Breast epithelium (tissue), 4 donors: ENCODE measurements at regions of chr13 and their contacts with region 1.

Region 1: DNA sequence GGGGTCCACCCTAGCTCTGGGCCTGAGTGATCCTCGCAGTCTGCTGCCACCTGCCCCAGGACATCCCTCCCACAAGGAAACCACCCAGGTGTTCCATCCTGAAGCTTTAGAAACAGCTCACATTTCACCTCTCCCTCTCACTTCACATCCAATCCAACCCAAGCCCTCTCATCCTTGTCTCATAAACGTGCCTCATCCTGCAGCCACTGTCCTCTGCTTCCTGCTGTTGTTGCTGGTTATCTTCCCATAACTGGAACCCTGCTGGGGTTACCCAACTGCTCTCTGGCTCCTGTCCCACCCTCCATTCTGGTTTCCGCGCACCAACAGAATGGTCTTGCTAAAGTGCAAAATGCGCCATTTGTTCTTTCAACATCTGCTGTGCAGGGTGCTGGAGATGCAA is 59.7 kb upstream of the MTIF3 start:
- DNase-seq: no peak
- H3K4me3 ChIP-seq: no peak overlapping the region
- H3K27ac ChIP-seq: no peak overlapping the region
- H3K4me1 ChIP-seq: no peaks in the 10 kb centered on the region
- H3K27me3 ChIP-seq: no peaks in the 10 kb centered on the region
- CTCF ChIP-seq: no peak
- POLR2A ChIP-seq: no peak

Region 2: GRCh38 chr13:27549406-27549981 is 39.4 kb after region 1 on chr13:
- intact Hi-C with region 1: no loop called
- DNase-seq: no peak
- H3K4me3 ChIP-seq: no peak overlapping the region
- H3K27ac ChIP-seq: no peak overlapping the region
- H3K4me1 ChIP-seq: no peaks in the 10 kb centered on the region
- H3K27me3 ChIP-seq: no peaks in the 10 kb centered on the region
- CTCF ChIP-seq: no peak
- POLR2A ChIP-seq: no peak

Region 3: DNA sequence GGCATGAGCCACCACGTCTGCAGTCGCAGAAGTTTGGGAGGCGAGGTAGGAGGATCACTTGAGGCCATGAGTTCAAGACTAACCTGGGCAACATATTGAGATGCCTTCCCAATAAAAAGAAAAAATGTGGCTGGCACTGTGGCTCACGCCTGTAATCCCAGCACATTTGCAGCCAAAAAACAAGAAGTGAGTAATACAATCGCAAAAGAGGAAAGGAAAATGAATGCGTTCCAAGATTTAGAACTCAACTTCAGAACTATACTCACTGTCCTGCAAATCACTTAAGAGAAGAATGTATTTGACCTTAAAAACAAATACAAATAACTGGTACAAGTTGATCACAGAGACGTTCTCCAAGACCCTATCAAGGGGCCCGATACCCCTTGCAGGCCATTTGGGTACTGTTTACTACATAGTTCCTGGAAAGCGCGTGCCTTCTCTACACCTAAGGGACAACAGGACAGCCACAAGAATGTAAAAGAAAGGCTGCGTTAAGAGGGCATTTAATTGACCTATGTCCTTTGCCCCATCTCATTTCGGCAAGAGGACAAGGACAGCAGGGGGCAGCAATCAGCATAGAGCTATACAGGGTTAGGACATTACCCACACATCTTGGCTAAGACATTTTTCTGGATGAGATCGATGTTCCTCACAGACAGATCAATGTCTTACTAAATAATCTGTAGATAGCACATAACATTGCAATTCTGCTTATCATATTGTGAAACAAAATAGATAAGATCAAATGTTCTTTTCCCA is 549.0 kb after region 1 on chr13:
- intact Hi-C with region 1: loop called (anchors 5 kb)
- DNase-seq: no peak
- H3K4me3 ChIP-seq: no peak overlapping the region
- H3K27ac ChIP-seq: no peak overlapping the region
- H3K4me1 ChIP-seq: no peaks in the 10 kb centered on the region
- H3K27me3 ChIP-seq: peaks cover 0 to 8% of the 10 kb centered on the region in 2 donors
- CTCF ChIP-seq: no peak
- POLR2A ChIP-seq: no peak

Region 4: DNA sequence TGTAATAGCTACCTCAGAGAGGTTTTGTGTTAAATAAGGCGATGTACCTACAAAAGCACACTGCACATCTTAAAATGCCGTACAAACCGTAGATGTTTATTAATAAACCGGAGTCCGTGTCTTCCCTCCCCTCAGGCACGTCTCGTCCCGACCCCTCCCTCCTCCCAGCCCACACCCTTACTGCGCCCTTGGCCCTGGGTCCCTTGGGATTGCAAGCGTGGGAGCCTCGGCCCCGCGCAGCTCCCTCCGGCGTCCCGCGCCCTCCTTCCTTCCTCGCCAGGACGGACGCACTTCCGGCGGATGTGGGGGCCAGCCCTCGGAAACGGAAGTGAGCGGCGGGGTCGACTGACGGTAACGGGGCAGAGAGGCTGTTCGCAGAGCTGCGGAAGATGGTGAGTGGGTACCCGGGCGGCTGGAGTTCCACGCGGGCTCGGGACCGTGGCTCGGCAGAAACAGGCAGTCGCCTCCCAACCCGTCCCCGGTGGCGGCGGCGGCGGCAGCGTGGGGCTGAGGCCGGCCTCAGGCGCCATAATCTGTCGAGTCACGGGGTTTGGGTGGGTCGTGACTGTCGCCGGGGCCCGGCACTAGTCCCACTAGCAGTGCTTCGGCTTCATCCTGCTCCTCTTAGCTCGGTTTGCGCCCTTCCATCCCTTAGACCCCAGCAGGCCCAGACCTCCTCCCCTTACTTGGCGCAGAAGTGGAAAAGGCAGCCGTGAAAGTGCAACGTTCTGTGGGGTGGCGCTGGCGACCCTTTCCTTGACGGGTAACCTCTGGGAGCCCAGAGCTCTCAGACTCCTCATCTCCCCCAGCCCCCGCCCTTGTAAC is 1148.9 kb after region 1 on chr13 and contains the start of gene POMP:
- intact Hi-C with region 1: no loop called
- DNase-seq: peak; percentile 82 to 89
- H3K4me3 ChIP-seq: peak within 1 kb of the TSS; percentile 66 to 98 (median 92)
- H3K27ac ChIP-seq: peak within 1 kb of the TSS; percentile 90 to 98
- H3K4me1 ChIP-seq: peaks cover 0 to 12% of the 10 kb centered on the region in 2 donors
- H3K27me3 ChIP-seq: no peaks in the 10 kb centered on the region
- CTCF ChIP-seq: no peak
- POLR2A ChIP-seq: peak; percentile 97
- total RNA-seq, gene POMP: 47.3 to 72.5 (median 65.5) TPM